ENCODE measurements at regions of chr9 and their contacts with region 1.

Region 1: DNA sequence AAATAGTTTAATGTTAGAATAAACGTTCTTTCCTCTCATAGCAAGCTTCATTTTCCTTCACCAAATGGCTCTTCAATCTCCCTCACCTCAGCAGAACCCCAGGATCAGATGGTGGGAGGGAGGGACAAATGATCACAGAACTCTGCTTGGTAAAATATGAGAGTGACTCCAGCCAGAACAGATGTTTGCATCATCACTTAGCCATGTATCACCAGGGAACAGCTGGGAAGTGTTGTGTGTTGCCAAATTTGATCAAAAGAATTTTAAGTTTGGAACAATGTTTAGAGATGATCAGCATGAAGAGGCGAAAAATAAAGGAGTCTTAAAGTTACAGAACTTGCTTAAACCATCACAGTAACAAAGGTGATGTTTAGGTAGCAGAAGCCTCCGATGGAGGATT is 115.7 kb downstream of the FRMD3 start:
- DNase-seq: no peak
- ATAC-seq: peak in 3 of 4 donors; percentile 66 to 82 (median 75)
- H3K4me3 ChIP-seq: no peak overlapping the region
- H3K27ac ChIP-seq: peak overlapping the region in 3 of 12 donors; percentile 14 to 24 (median 18)
- H3K4me1 ChIP-seq: peaks cover 0 to 38% (median 9%) of the 10 kb centered on the region in 12 donors
- H3K27me3 ChIP-seq: no peaks in the 10 kb centered on the region
- CTCF ChIP-seq: no peak
- POLR2A ChIP-seq: no peak

Region 2: GRCh38 chr9:83355024-83355444 is 67.5 kb before region 1 on chr9:
- intact Hi-C with region 1: loop called in 1 of 10 experiments (anchors 10 kb)
- DNase-seq: peak in 4 of 5 donors; percentile 37 to 58 (median 50)
- ATAC-seq: peak; percentile 44 to 89 (median 81)
- H3K4me3 ChIP-seq: no peak overlapping the region
- H3K27ac ChIP-seq: peak overlapping the region in 11 of 12 donors; percentile 19 to 78 (median 60)
- H3K4me1 ChIP-seq: peaks cover 0 to 11% (median 0%) of the 10 kb centered on the region in 12 donors
- H3K27me3 ChIP-seq: no peaks in the 10 kb centered on the region
- CTCF ChIP-seq: no peak
- POLR2A ChIP-seq: no peak

Region 3: GRCh38 chr9:83372957-83373356 is 49.6 kb before region 1 on chr9:
- intact Hi-C with region 1: loop called in 1 of 10 experiments (anchors 2 kb)
- DNase-seq: no peak
- ATAC-seq: no peak
- H3K4me3 ChIP-seq: no peak overlapping the region
- H3K27ac ChIP-seq: no peak overlapping the region
- H3K4me1 ChIP-seq: no peaks in the 10 kb centered on the region
- H3K27me3 ChIP-seq: no peaks in the 10 kb centered on the region
- CTCF ChIP-seq: no peak
- POLR2A ChIP-seq: no peak

Region 4: GRCh38 chr9:83462377-83462776 is 39.9 kb after region 1 on chr9:
- intact Hi-C with region 1: no loop called
- DNase-seq: no peak
- ATAC-seq: no peak
- H3K4me3 ChIP-seq: no peak overlapping the region
- H3K27ac ChIP-seq: no peak overlapping the region
- H3K4me1 ChIP-seq: peaks cover 0 to 20% (median 7%) of the 10 kb centered on the region in 12 donors
- H3K27me3 ChIP-seq: no peaks in the 10 kb centered on the region
- CTCF ChIP-seq: no peak
- POLR2A ChIP-seq: no peak

Region 5: GRCh38 chr9:83473488-83473971 is 51.0 kb after region 1 on chr9:
- intact Hi-C with region 1: loop called in 1 of 10 experiments (anchors 2 kb)
- DNase-seq: no peak
- ATAC-seq: peak in 1 of 4 donors; percentile 32
- H3K4me3 ChIP-seq: peak overlapping the region in 8 of 12 donors; percentile 8 to 44 (median 24)
- H3K27ac ChIP-seq: peak overlapping the region; percentile 7 to 88 (median 76)
- H3K4me1 ChIP-seq: peaks cover 3 to 58% (median 27%) of the 10 kb centered on the region in 12 donors
- H3K27me3 ChIP-seq: no peaks in the 10 kb centered on the region
- CTCF ChIP-seq: no peak
- POLR2A ChIP-seq: no peak